Posterior cingulate gyrus (tissue), 11 donors: ENCODE measurements at regions of chr3 and their contacts with region 1.

Region 1: DNA sequence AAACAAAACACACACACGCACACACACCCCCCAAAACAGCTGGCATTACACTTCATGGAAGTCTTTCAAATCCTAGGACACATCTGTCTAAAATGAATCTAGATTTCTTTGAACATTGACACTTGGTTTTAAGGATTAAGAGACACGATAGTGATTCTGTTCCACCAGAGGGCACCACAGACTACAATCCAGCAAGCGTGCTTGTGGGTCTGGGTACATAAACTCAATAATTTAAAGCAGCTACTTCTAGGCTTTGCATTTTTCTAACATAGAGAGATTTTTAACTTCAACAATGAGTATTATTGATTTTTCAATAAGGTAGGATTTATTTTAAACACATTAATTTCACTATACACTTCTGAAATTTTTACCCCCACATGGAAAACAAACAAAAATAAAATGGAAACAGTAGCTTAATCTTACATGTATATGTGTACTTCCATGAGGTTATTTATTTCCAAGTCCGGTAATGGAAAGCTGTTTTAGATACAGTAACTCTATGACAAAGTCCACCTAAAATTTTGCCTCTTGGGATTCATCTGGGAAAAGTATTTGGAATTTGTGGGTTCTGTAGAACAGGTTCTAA is 564.0 kb upstream of the TGFBR2 start:
- DNase-seq: peak in 8 of 10 donors; percentile 35 to 86 (median 62)

Region 2: GRCh38 chr3:30199096-30199759 is 156.9 kb after region 1 on chr3:
- intact Hi-C with region 1: loop called (anchors 2 kb)
- DNase-seq: peak; percentile 16 to 93 (median 76)

Region 3: DNA sequence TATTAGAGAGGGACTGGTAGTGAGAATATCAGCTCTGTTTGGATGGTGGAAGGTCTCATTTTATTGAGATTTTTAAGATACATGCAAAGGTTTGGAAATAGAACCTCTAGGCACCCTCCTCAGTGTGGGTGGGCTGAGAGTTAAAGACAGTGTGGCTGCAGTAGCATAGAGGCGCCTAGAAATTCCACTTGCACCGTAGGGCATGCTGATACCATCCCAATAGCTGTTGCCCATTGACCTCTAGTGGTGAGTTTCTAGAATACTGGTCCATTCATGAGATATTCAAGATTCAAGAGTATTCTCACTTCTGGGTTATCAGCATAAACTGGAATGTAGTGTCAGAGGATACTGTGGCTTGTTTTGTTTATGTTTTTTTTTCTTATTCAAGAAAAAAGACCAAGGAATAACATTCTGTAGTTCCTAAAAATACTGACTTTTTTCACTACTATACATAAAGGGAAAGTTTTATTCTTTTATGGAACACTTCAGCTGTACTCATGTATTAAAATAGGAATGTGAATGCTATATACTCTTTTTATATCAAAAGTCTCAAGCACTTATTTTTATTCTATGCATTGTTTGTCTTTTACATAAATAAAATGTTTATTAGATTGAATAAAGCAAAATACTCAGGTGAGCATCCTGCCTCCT is 651.2 kb after region 1 on chr3:
- intact Hi-C with region 1: loop called (anchors 5 kb)
- DNase-seq: peak in 3 of 10 donors; percentile 19 to 40 (median 28)

Region 4: GRCh38 chr3:30751610-30752299 is 709.4 kb after region 1 on chr3:
- intact Hi-C with region 1: loop called (anchors 5 kb)
- DNase-seq: peak in 8 of 10 donors; percentile 8 to 85 (median 23)

Region 5: DNA sequence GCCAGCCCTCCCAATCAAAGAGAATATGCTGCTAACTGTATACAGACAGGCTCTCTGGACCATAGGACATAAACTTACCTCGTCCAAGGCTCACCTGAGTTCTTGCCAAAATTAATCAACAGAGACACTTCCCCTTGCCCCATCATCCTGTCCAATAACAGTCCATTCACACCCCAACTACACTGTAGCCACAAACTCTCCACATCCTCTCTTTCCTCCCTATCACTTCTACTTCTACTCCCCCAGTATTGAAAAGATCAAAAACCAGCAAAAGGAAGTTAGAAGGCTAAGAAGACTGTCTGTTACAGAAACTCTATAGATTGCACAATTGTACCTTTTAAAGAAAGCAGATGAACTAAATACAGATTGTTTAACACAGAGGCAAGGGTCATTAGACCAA is 1356.9 kb after region 1 on chr3:
- intact Hi-C with region 1: no loop called
- DNase-seq: no peak